ENCODE measurements at regions of chr6 and their contacts with region 1.

Region 1: GRCh38 chr6:44265007-44265721 is at the start of gene NFKBIE:
- DNase-seq: peak; percentile 95
- H3K27ac ChIP-seq: peak within 1 kb of the TSS; percentile 67
- CTCF ChIP-seq: peak; percentile 23

Region 2: DNA sequence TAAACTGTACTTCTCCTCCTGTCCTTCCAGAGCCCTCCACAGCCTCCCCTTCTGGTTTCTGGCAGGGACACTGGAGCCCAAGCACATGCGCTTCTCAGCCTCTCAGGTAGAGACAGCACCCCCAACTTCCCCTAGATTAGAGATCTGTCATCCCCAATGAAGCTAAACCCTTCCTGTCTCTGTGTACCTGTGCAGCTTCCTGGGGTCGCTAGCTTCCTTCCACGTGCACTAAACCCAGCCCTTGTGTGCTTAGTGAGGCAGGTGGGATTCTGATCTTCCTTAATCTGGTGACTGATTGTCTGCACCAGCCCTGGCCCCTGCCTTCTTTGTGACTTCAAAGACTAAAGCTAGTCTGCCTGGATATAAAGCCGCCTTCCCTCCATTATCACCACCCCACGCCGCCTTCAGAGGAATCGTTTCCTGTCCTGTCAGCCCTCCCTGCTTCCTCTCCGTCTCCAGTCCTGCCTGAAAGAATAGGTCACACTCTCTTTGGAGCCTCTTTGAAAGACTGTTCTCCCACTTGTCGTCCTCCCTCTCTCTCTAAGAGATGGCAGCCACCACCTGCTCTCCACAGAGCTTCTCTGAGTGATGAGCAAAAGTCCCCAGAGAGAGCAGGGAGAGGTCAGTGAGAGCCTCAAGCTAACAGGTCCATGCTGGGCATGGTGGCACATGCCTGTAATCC is 79.1 kb before region 1 on chr6:
- CTCF ChIA-PET with region 1: no interaction called
- POLR2A ChIA-PET with region 1: no interaction called
- DNase-seq: no peak
- H3K27ac ChIP-seq: no peak overlapping the region
- CTCF ChIP-seq: no peak

Region 3: DNA sequence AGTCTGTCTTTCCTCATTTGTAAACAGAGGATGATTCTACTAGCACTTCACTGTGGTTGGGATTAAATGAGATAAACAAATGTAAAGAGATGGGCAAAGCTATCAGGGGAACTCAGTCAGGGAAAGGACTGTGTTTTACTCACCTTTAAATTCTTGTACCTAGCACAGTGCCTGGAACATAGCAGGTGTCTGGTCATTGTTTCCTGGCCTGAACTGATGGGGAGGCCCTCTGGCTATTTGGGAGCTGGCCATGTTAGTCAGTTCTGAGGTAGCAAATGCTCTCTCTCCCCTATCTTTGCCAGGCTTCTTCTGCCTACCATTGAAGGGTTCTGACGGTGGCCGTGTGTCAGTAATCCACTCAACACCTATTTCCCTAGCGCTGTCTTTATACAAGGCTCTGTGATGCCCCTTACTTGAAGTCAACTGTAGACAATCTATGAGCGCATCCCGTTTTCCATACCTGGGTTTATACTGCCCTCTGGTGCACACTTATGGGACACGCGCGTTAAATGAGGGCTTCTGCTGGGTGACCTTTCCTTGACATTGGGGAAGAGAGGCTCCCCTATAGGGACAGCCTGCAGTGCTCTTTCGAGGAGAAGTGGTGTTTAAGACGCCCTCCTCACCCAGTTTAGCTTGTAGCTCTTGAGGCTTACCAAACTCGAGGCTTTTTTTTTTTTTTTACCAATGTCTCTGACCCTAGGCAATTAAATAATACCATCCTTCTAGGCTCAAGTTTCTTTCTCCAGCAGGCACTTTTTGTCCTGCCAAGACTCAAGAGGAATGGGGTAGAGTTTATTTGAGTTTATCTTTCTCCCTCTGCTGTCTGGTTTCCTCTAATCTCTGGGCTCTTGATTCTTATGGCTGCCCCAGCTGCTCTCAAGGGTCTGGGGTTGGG is 73.3 kb after region 1 on chr6:
- CTCF ChIA-PET with region 1: interaction called, 48 read pairs
- POLR2A ChIA-PET with region 1: no interaction called
- DNase-seq: peak; percentile 52
- H3K27ac ChIP-seq: no peak overlapping the region
- CTCF ChIP-seq: peak; percentile 78

Region 4: GRCh38 chr6:44446628-44447306 is 181.6 kb after region 1 on chr6:
- CTCF ChIA-PET with region 1: no interaction called
- POLR2A ChIA-PET with region 1: no interaction called
- DNase-seq: peak; percentile 24
- H3K27ac ChIP-seq: no peak overlapping the region
- CTCF ChIP-seq: no peak

Measured in RWPE1 (cell line).